A673 (cell line): ENCODE measurements at regions of chr2 and their contacts with region 1.

Region 1: GRCh38 chr2:223026348-223027108 is 25.5 kb upstream of the KCNE4 start:
- DNase-seq: no peak
- H3K4me3 ChIP-seq: no peak overlapping the region
- H3K27ac ChIP-seq: no peak overlapping the region
- H3K4me1 ChIP-seq: peaks cover 12% of the 10 kb centered on the region
- H3K27me3 ChIP-seq: no peaks in the 10 kb centered on the region
- CTCF ChIP-seq: no peak

Region 2: DNA sequence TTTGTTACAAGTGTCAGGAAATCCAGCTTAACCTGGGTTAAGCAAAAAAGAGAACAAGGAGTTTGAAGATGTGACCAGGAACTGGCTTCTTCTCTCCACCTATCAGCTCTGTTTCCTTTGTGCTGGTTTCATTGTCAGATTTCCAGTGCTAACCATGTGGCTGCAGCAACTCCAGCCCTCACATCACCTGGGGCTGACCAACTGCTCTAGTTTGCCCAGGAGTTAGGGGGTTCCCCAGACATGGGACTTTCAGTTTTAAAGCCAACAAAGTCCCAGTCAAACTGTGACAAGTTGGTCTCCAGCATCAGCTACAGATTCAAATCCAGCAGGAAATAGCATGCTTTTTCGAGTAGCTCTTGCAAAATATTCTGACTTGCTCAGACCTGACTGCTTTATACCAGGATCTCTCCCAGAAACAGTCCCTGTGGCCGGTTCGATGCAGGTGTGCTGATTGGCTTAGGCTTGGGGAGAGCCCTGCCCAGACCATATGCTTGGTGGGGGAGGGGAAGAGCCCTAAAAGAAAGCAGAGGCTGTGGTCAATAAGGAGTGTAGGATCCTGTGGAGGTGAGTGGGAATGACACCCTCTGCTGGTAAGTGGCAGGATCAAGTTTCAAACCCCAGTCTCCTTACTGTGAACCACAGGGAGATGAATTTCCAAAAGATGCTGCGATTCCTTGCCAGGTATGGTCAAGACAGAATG is 75.0 kb after region 1 on chr2:
- CTCF ChIA-PET with region 1: no interaction called
- POLR2A ChIA-PET with region 1: no interaction called
- intact Hi-C with region 1: no loop called
- DNase-seq: peak; percentile 70
- H3K4me3 ChIP-seq: no peak overlapping the region
- H3K27ac ChIP-seq: peak overlapping the region; percentile 31
- H3K4me1 ChIP-seq: peaks cover 46% of the 10 kb centered on the region
- H3K27me3 ChIP-seq: no peaks in the 10 kb centered on the region
- CTCF ChIP-seq: peak; percentile 68

Region 3: GRCh38 chr2:223935459-223936125 is 909.1 kb after region 1 on chr2:
- CTCF ChIA-PET with region 1: no interaction called
- POLR2A ChIA-PET with region 1: interaction called, 19 read pairs
- intact Hi-C with region 1: no loop called
- DNase-seq: no peak
- H3K4me3 ChIP-seq: no peak overlapping the region
- H3K27ac ChIP-seq: peak overlapping the region; percentile 14
- H3K4me1 ChIP-seq: peaks cover 55% of the 10 kb centered on the region
- H3K27me3 ChIP-seq: no peaks in the 10 kb centered on the region
- CTCF ChIP-seq: no peak